ENCODE measurements at regions of chr17 and their contacts with region 1.

Region 1: DNA sequence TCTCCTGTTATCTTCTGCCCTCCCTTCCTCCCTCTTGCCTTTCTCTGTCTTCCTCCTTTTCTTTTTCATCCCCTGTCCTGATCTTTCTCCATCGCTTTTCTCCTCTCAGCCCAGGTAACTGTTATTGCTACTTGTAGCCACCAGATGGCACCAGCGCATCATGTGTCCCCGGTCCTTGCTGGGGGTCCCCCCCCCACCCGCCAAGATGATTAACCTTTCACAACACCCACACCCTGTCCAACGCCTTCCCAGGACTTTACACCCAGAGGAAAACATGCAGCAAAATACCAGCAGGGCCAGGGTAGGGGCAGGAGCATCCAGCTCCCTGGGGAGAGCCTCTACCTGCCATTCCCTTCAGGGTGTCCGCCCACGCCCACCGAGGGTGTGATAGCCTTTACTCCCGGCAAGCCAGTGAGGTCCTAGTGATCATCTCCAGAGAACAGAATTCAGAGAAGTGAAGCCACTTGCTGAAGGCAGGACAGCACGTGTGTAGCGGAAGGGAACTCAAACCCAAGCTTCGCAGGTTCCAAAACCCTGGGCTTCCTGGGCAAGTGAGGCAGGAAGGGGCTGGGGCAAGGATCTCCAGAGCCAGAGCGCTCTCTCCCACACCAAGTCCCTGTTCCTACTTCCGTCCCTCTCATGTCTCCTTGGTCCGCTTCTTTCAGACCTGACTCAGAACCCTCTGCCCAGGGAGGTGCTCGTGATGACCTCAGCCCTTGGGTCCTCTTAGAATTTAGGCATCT is 13.5 kb upstream of the TAC4 start:
- DNase-seq: peak; percentile 65 to 68
- H3K4me3 ChIP-seq: no peak overlapping the region
- H3K27ac ChIP-seq: no peak overlapping the region
- H3K4me1 ChIP-seq: peaks cover 4% of the 10 kb centered on the region
- H3K27me3 ChIP-seq: no peaks in the 10 kb centered on the region
- CTCF ChIP-seq: peak; percentile 99

Region 2: DNA sequence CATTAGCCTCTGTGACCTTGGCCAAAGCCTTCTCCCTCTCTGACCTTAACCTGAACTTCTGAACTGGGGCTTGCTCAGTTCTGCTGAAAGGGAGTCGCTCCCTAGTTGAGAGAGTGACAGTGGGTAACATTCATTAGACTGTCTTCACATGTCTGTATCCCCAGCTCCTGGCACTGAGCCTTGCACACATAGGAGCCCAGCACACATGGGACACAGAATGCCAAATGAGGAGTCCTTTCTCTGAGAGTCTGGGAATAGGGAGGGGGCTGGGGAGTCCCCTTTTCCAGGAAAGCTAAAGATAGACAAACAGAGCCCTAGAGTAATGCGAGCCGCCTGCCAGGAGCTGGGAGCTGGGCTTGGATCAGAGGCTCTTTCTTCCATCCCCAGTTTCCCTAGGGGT is 16.0 kb before region 1 on chr17:
- CTCF ChIA-PET with region 1: interaction called, 11 read pairs
- POLR2A ChIA-PET with region 1: no interaction called
- intact Hi-C with region 1: no loop called
- DNase-seq: no peak
- H3K4me3 ChIP-seq: no peak overlapping the region
- H3K27ac ChIP-seq: no peak overlapping the region
- H3K4me1 ChIP-seq: no peaks in the 10 kb centered on the region
- H3K27me3 ChIP-seq: peaks cover 4% of the 10 kb centered on the region
- CTCF ChIP-seq: no peak

Region 3: DNA sequence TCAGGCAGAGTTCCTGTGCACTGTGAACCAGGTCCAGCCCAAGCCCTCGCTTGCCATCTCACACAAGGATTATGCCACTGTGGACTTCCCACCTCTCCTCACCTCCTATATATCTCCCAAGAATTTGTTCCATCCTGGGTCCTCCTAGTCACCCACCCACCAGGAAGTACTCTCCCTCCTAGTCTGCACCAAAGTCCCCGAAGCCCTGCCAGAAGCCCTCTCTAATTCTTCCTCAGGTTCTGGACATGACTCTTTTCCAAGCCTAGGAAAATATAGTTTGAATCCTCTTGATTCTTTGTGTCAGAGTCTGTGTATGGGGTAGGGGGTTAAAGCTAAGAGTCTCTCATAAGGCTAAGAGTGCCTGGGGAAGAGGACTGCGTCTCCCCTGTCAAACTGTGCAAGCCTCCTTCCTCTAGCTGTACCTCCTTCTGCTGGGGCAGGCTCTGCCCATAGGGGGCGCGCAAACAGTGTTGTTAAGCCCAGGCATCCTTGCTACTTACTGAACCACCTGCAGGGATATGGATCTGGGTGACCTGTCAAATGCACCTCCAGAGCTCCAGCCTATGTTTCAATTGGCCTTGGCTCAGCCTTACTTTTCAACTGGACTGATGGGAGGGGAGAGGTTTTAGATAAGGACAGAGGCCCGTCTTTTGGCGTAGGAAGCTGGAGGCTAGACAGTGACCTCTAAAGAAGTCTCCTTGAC is 91.0 kb after region 1 on chr17:
- CTCF ChIA-PET with region 1: no interaction called
- POLR2A ChIA-PET with region 1: no interaction called
- intact Hi-C with region 1: loop called (anchors 1 kb)
- DNase-seq: peak; percentile 70 to 83
- H3K4me3 ChIP-seq: no peak overlapping the region
- H3K27ac ChIP-seq: no peak overlapping the region
- H3K4me1 ChIP-seq: no peaks in the 10 kb centered on the region
- H3K27me3 ChIP-seq: peaks cover 3% of the 10 kb centered on the region; the same call in 1 of the 2 replicates
- CTCF ChIP-seq: peak; percentile 97

Region 4: GRCh38 chr17:50087246-50087911 is 226.1 kb after region 1 on chr17:
- CTCF ChIA-PET with region 1: no interaction called
- POLR2A ChIA-PET with region 1: no interaction called
- intact Hi-C with region 1: loop called (anchors 1 kb)
- DNase-seq: peak; percentile 68 to 72
- H3K4me3 ChIP-seq: no peak overlapping the region
- H3K27ac ChIP-seq: no peak overlapping the region
- H3K4me1 ChIP-seq: no peaks in the 10 kb centered on the region
- H3K27me3 ChIP-seq: no peaks in the 10 kb centered on the region
- CTCF ChIP-seq: peak; percentile 97